ENCODE measurements at regions of chr16 and their contacts with region 1.

Region 1: DNA sequence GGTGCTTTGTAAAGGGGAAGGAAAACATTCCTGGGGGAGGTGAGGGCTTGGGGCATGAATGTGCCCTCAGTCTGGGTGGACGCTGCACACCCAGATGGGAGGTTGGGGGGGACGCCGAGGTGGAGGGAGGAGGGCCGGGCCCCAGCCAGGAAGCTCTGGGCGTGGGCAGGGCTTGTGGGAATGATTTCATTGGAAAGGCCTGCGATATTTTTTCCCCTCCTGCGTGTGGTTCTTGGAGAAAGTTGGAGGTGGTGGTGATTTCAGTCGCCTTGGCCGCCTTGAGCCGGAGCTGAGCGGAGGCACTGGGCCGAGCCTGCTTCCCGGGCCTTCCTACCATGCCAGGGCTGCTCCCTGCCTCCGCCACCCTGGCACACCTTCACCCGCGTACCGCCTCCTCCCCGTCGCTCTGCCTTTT is 26.4 kb upstream of the CLEC18A start:
- DNase-seq: peak in 2 of 4 donors; percentile 41 to 48
- ATAC-seq: peak; percentile 52
- H3K4me3 ChIP-seq: no peak overlapping the region
- H3K27ac ChIP-seq: peak overlapping the region in 1 of 2 donors; percentile 33
- H3K4me1 ChIP-seq: no peaks in the 10 kb centered on the region
- H3K27me3 ChIP-seq: no peaks in the 10 kb centered on the region
- CTCF ChIP-seq: no peak

Region 2: GRCh38 chr16:68823401-68824135 is 1101.2 kb before region 1 on chr16:
- intact Hi-C with region 1: no loop called
- DNase-seq: no peak
- ATAC-seq: no peak
- H3K4me3 ChIP-seq: no peak overlapping the region
- H3K27ac ChIP-seq: no peak overlapping the region
- H3K4me1 ChIP-seq: no peaks in the 10 kb centered on the region
- H3K27me3 ChIP-seq: no peaks in the 10 kb centered on the region
- CTCF ChIP-seq: no peak

Region 3: GRCh38 chr16:69796351-69797118 is 128.2 kb before region 1 on chr16:
- intact Hi-C with region 1: loop called in 1 of 2 experiments (anchors 5 kb)
- DNase-seq: peak in 2 of 4 donors; percentile 62 to 77
- ATAC-seq: peak; percentile 96
- H3K4me3 ChIP-seq: no peak overlapping the region
- H3K27ac ChIP-seq: no peak overlapping the region
- H3K4me1 ChIP-seq: peaks cover 0 to 5% of the 10 kb centered on the region in 2 donors
- H3K27me3 ChIP-seq: no peaks in the 10 kb centered on the region
- CTCF ChIP-seq: peak; percentile 75 to 88

Region 4: GRCh38 chr16:69820926-69821541 is 103.8 kb before region 1 on chr16:
- intact Hi-C with region 1: no loop called
- DNase-seq: peak in 2 of 4 donors; percentile 44 to 65
- ATAC-seq: peak; percentile 89
- H3K4me3 ChIP-seq: no peak overlapping the region
- H3K27ac ChIP-seq: peak overlapping the region; percentile 41 to 53
- H3K4me1 ChIP-seq: peaks cover 0 to 15% of the 10 kb centered on the region in 2 donors
- H3K27me3 ChIP-seq: no peaks in the 10 kb centered on the region
- CTCF ChIP-seq: no peak

Region 5: DNA sequence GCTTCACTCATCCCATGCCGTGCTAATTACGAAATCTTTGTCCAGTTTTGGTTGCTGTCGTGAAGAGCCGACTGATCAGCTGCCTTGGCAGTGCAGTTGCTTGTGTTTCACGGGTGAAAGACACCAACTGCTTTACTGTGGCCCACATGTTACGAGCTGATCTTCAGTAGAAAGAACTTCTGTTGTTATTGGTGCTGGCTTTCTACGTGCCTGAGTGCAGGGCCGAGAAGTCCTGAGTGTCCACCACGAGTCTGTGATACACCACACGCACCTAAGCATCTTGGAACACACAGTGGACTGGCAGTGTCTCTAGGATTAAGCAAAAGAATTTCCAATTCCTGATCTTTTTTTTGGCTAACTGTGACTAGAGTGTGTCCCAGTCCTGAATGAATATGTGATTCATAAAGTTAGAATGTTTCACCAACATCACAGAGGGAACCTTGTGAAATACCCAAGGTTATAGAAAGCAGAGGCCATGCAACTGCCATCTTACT is 44.1 kb before region 1 on chr16:
- intact Hi-C with region 1: no loop called
- DNase-seq: no peak
- ATAC-seq: no peak
- H3K4me3 ChIP-seq: no peak overlapping the region
- H3K27ac ChIP-seq: no peak overlapping the region
- H3K4me1 ChIP-seq: no peaks in the 10 kb centered on the region
- H3K27me3 ChIP-seq: no peaks in the 10 kb centered on the region
- CTCF ChIP-seq: no peak

Region 6: DNA sequence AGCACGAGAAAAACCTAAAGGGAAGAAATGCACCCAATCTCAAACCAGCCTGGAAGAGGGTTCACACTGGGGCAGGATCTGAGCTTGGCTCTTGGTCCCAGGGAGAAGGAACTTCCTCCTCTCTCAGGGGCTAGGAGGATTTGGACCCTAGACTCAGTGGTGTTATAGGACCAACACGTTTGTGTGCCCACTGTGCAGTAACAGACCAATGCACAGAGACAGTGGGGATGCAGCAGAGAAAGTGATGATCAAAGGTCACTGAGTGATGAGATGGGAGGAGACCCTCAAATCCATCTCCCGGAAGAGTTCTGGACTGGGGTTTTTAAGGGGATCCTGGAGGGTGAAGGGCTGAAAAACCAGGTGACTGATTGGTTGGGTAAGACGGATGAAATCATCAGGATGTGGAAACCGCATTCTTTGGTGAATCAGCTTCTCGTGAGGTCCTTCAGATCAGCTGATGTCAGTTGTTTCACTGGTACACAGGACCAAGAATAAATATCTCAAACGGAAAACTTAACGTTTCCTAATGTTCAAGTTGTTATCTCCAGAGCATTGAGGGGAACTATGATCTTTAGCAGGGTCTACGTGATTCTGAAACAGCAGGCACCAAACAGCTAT is 879.4 kb after region 1 on chr16:
- intact Hi-C with region 1: no loop called
- DNase-seq: no peak
- ATAC-seq: no peak
- H3K4me3 ChIP-seq: no peak overlapping the region
- H3K27ac ChIP-seq: peak overlapping the region in 1 of 2 donors; percentile 61
- H3K4me1 ChIP-seq: peaks cover 10 to 13% of the 10 kb centered on the region in 2 donors
- H3K27me3 ChIP-seq: peaks cover 0 to 24% of the 10 kb centered on the region in 2 donors
- CTCF ChIP-seq: no peak